ENCODE measurements at regions of chr19 and their contacts with region 1.

Region 1: GRCh38 chr19:37077934-37078725 is at the start of gene ZNF420:
- DNase-seq: peak; percentile 83
- ATAC-seq: peak; percentile 96
- H3K4me3 Mint-ChIP-seq: peak within 1 kb of the TSS; percentile 97
- H3K27ac Mint-ChIP-seq: peak within 1 kb of the TSS; percentile 92
- H3K4me1 Mint-ChIP-seq: peaks cover 32% of the 10 kb centered on the region
- H3K27me3 Mint-ChIP-seq: no peaks in the 10 kb centered on the region
- CTCF ChIP-seq: no peak
- total RNA-seq, gene ZNF420: 11.6 and 11.9 TPM in 2 replicates

Region 2: DNA sequence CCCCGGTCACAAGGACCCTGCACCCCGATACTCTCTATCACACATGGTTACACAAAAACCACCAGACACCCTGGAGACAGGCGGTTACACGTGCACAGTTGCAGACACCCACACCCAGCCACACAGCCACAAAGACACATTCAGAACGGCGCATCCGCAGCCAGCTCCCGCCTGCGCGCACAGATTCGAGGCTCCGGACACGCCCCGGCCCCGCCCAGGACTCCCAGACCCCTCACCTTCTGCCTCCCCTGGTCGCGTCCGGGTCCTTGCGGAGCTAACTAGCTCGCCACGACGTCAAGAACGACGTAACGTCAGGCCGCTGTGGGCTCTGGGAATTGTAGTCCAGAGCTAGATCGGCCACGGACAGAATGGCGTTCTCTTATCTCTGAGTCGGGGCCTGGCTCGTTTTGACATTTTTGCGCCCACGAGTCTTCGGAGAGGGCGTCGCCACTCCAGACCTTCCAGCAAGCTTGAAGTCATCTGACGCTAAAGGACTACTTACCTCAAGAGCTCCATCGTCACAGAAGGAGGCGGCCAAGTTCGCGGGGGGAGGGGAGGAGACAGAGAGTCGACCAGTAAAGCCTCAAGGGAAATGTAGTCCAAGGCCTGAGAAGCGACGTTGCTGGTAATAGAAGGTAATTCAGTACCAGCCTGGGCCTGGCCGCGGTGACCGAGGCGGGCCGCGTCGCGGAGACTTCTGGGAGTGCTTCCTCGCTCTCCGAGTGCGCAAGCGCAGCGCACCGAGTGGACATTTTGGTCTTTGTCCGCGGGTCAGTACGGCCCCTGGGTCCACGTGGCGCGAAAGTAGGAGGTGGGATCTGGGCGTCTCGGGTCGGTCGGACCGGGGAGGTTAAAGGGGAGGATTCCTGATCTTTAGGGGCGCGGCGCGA is 863.5 kb before region 1 on chr19 and contains the starts of genes ZNF146 and ZNF565:
- CTCF ChIA-PET with region 1: no interaction called
- POLR2A ChIA-PET with region 1: interaction called, 6 read pairs
- intact Hi-C with region 1: loop called (anchors 5 kb)
- DNase-seq: peak; percentile 90
- ATAC-seq: peak; percentile 90
- H3K4me3 Mint-ChIP-seq: no peak within 1 kb of the TSS
- H3K27ac Mint-ChIP-seq: no peak within 1 kb of the TSS
- H3K4me1 Mint-ChIP-seq: peaks cover 29% of the 10 kb centered on the region
- H3K27me3 Mint-ChIP-seq: no peaks in the 10 kb centered on the region
- CTCF ChIP-seq: no peak
- total RNA-seq, gene ZNF146: 57.8 and 63.2 TPM in 2 replicates
- total RNA-seq, gene ZNF565: 2.3 and 3.2 TPM in 2 replicates

Region 3: DNA sequence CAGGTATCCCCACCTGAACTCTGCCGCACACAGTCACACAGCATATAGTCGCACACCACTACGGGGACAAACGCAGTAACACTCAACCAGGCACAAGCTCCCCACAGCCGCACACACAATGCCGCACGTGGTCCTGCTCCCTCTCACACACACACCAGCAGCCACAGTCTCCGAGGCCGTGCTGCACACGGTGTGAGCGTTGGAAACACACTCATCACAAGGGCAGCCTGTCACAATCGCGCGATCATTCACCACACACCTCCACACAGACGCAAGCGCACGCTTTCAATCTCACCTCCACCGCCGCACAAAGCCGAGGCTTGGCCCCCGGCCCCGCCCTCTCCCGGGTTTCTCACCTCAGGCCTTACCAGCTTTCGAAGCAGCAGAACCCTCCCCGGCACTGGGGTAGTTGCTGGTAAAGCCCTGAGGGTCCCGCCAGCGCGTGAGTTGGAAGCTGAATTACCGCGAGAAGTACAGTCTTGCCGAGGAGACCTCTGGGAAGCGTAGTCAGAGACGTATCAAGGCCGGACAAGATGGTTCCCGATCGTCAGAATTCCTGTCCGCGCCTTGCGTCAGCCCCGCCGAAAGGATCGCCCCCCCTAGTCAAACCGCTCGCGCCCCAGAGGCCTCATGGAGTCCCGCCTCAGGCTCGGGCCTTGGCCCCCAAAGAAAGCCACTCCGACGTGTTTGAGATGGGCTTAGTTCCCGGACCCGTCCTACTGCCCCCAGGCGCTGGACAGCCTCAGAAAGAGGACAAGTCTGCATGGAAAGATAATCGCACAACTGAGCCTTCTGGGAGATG is 588.8 kb before region 1 on chr19 and contains the start of gene ZNF566:
- CTCF ChIA-PET with region 1: no interaction called
- POLR2A ChIA-PET with region 1: interaction called, 5 read pairs
- intact Hi-C with region 1: loop called (anchors 1 kb)
- DNase-seq: peak; percentile 81
- ATAC-seq: peak; percentile 92
- H3K4me3 Mint-ChIP-seq: peak within 1 kb of the TSS; percentile 98
- H3K27ac Mint-ChIP-seq: peak within 1 kb of the TSS; percentile 99
- H3K4me1 Mint-ChIP-seq: peaks cover 46% of the 10 kb centered on the region
- H3K27me3 Mint-ChIP-seq: no peaks in the 10 kb centered on the region
- CTCF ChIP-seq: no peak
- total RNA-seq, gene ZNF566: 14.1 and 16.6 TPM in 2 replicates

Region 4: DNA sequence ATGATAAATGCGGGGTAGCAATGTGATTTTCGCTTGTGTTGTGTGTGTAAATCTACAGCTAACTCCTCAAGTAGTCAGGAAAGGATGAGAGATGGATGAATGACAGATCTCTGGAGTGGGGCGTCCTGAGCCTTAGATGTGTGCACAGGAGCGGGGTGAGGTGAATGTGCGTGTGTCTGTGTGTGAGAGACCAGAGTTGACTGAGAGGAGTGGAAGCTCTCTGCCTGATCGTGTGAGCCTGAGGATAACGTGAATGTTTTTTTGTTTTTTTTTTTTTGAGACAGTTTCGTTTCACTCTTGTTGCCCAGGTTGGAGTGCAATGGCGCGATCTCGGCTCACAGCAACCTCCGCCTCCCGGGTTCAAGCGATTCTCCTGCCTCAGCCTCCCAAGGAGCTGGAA is 412.3 kb before region 1 on chr19:
- CTCF ChIA-PET with region 1: no interaction called
- POLR2A ChIA-PET with region 1: no interaction called
- intact Hi-C with region 1: loop called (anchors 1 kb)
- DNase-seq: no peak
- ATAC-seq: no peak
- H3K4me3 Mint-ChIP-seq: peak overlapping the region; percentile 98
- H3K27ac Mint-ChIP-seq: peak overlapping the region; percentile 72
- H3K4me1 Mint-ChIP-seq: peaks cover 31% of the 10 kb centered on the region
- H3K27me3 Mint-ChIP-seq: no peaks in the 10 kb centered on the region
- CTCF ChIP-seq: no peak

Region 5: DNA sequence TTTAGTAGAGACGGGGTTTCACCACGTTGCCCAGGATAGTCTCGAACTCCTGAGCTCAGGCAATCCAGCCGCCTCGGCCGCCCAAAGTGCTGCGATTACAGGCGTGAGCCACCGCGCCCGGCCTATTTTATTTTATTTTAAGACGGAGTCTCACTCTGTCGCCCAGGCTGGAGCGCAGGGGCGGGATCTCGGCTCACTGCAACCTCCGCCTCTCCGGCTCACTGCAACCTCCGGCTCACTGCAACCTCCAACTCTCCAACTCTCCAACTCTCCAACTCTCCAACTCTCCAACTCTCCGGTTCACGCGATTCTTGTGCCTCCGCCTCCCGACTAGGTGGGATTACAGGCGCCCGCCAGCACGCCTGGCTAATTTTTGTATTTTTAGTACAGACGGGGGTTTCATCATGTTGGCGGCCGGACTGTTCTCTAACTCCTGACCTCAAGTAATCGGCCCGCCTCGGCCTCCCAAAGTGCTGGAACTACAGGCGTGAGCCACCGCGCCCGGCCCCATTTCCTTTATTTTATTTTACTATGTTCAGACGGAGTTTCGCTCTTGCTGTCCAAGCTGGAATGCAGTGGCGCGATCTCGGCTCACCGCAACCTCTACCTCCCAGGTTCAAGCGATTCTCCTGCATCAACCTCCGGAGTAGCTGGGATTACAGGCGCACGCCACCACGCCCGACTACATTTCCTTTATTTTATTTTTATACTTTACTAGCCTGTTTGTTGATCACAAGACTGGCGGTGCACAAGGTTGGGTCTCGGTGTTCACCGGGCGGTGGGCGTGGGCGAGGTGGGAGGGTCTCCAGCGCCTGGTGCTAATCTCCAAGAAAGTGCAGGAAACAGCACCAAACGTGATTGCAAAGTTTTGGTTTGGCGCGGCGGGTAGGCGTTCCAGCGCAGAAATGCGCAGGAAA is 281.8 kb before region 1 on chr19:
- CTCF ChIA-PET with region 1: no interaction called
- POLR2A ChIA-PET with region 1: interaction called, 4 read pairs
- intact Hi-C with region 1: loop called (anchors 1 kb)
- DNase-seq: no peak
- ATAC-seq: no peak
- H3K4me3 Mint-ChIP-seq: peak overlapping the region; percentile 96
- H3K27ac Mint-ChIP-seq: peak overlapping the region; percentile 99
- H3K4me1 Mint-ChIP-seq: peaks cover 24% of the 10 kb centered on the region
- H3K27me3 Mint-ChIP-seq: peaks cover 4% of the 10 kb centered on the region
- CTCF ChIP-seq: no peak

Region 6: GRCh38 chr19:36973021-36973843 is 104.9 kb before region 1 on chr19:
- CTCF ChIA-PET with region 1: no interaction called
- POLR2A ChIA-PET with region 1: no interaction called
- intact Hi-C with region 1: loop called (anchors 1 kb)
- DNase-seq: peak; percentile 75
- ATAC-seq: peak; percentile 97
- H3K4me3 Mint-ChIP-seq: peak overlapping the region; percentile 98
- H3K27ac Mint-ChIP-seq: peak overlapping the region; percentile 94
- H3K4me1 Mint-ChIP-seq: peaks cover 10% of the 10 kb centered on the region
- H3K27me3 Mint-ChIP-seq: no peaks in the 10 kb centered on the region
- CTCF ChIP-seq: peak; percentile 38

Region 7: GRCh38 chr19:37059142-37059541 is 19.0 kb before region 1 on chr19:
- CTCF ChIA-PET with region 1: no interaction called
- POLR2A ChIA-PET with region 1: no interaction called
- intact Hi-C with region 1: no loop called
- DNase-seq: no peak
- ATAC-seq: no peak
- H3K4me3 Mint-ChIP-seq: no peak overlapping the region
- H3K27ac Mint-ChIP-seq: no peak overlapping the region
- H3K4me1 Mint-ChIP-seq: no peaks in the 10 kb centered on the region
- H3K27me3 Mint-ChIP-seq: peaks cover 4% of the 10 kb centered on the region
- CTCF ChIP-seq: no peak

Region 8: GRCh38 chr19:37370880-37371661 is 292.9 kb after region 1 on chr19 and contains the start of gene ZNF527:
- CTCF ChIA-PET with region 1: no interaction called
- POLR2A ChIA-PET with region 1: no interaction called
- intact Hi-C with region 1: loop called (anchors 2 kb)
- DNase-seq: peak; percentile 96
- ATAC-seq: peak; percentile 98
- H3K4me3 Mint-ChIP-seq: peak within 1 kb of the TSS; percentile 99
- H3K27ac Mint-ChIP-seq: peak within 1 kb of the TSS; percentile 98
- H3K4me1 Mint-ChIP-seq: peaks cover 14% of the 10 kb centered on the region
- H3K27me3 Mint-ChIP-seq: no peaks in the 10 kb centered on the region
- CTCF ChIP-seq: no peak
- total RNA-seq, gene ZNF527: 6.3 and 8.1 TPM in 2 replicates

Measured in activated B cell treated with CpG ODN at 0.5 μM for 24 hours (primary cell).